ENCODE measurements at regions of chr6 and their contacts with region 1.

Region 1: DNA sequence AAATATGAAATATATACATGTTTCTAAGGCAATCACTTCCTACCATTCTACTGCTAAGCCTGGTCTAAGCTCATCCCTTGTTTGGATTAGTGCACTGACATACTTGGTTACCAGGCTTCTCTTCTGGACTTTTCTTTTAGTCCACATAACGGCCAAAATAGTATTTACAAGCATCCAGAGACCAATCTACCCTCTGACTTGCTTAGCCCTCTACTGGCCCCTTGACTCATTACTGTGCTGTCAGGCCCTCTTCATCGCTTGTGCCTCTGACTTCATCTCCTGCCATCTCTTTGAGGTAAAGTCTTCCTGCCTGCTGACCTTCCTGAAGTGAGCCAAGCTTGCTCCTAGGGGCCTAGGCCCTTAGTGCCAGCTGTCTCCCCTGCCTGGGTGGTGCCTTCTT is 35.1 kb downstream of the TULP4 start:
- DNase-seq: no peak
- H3K4me3 ChIP-seq: no peak overlapping the region
- H3K27ac ChIP-seq: no peak overlapping the region
- H3K4me1 ChIP-seq: no peaks in the 10 kb centered on the region
- H3K27me3 ChIP-seq: no peaks in the 10 kb centered on the region
- CTCF ChIP-seq: no peak
- EP300 ChIP-seq: no peak
- POLR2A ChIP-seq: no peak

Region 2: GRCh38 chr6:158309814-158310213 is 37.5 kb before region 1 on chr6:
- in situ Hi-C with region 1: no loop called
- intact Hi-C with region 1: loop called (anchors 5 kb)
- DNase-seq: no peak
- H3K4me3 ChIP-seq: no peak overlapping the region
- H3K27ac ChIP-seq: no peak overlapping the region
- H3K4me1 ChIP-seq: no peaks in the 10 kb centered on the region
- H3K27me3 ChIP-seq: no peaks in the 10 kb centered on the region
- CTCF ChIP-seq: no peak
- EP300 ChIP-seq: no peak
- POLR2A ChIP-seq: no peak